ENCODE measurements at regions of chr22 and their contacts with region 1.

Region 1: GRCh38 chr22:46256358-46256958 is 6.4 kb upstream of the CDPF1 start:
- DNase-seq: no peak
- H3K4me3 ChIP-seq: no peak overlapping the region
- H3K27ac ChIP-seq: no peak overlapping the region
- H3K4me1 ChIP-seq: peaks cover 0 to 35% (median 9%) of the 10 kb centered on the region in 6 donors
- H3K27me3 ChIP-seq: peaks cover 0 to 17% (median 0%) of the 10 kb centered on the region in 7 donors
- CTCF ChIP-seq: no peak
- POLR2A ChIP-seq: no peak

Region 2: DNA sequence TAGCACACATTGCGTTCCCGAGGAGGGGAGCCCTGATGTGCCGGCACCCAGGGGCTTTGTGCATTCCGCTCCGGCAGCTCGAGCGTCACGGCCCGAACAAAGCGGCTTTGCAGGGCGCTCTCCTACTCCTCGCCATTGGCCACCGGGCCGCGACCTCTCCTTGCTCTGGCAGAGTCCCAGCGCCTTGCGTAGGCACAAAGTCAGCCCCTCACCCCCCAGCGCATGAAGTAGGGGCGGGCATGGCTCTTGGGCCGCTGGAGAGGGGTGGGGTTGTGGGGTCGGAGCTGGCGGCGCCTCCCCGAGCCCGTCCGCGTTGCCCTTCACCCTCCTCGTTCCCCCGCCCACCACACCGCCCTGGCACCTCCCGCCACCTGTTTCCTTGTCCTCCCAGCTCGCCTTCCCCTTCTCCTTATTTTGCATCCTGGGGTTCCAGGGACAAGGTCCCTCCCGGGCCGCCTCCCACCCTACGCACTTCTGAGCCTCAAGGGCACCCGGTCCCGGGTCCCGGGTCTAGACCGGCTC is 106.9 kb before region 1 on chr22:
- intact Hi-C with region 1: loop called (anchors 5 kb)
- DNase-seq: peak; percentile 89
- H3K4me3 ChIP-seq: peak overlapping the region; percentile 64 to 98 (median 90)
- H3K27ac ChIP-seq: peak overlapping the region; percentile 63 to 85 (median 81)
- H3K4me1 ChIP-seq: peaks cover 12 to 52% (median 29%) of the 10 kb centered on the region in 6 donors
- H3K27me3 ChIP-seq: no peaks in the 10 kb centered on the region
- CTCF ChIP-seq: no peak
- POLR2A ChIP-seq: no peak

Measured in spleen (tissue), 13 donors.